ENCODE measurements at regions of chr9 and their contacts with region 1.

Region 1: GRCh38 chr9:70111042-70111602 is 67.5 kb downstream of the MAMDC2 start:
- DNase-seq: no peak
- H3K4me3 ChIP-seq: no peak overlapping the region
- H3K27me3 ChIP-seq: no peaks in the 10 kb centered on the region
- CTCF ChIP-seq: peak; percentile 91

Region 2: GRCh38 chr9:69919461-69920061 is 191.6 kb before region 1 on chr9:
- CTCF ChIA-PET with region 1: interaction called, 34 read pairs
- POLR2A ChIA-PET with region 1: no interaction called
- DNase-seq: no peak
- H3K4me3 ChIP-seq: no peak overlapping the region
- H3K27me3 ChIP-seq: no peaks in the 10 kb centered on the region
- CTCF ChIP-seq: peak; percentile 68

Region 3: GRCh38 chr9:69971643-69972449 is 139.3 kb before region 1 on chr9:
- CTCF ChIA-PET with region 1: interaction called, 130 read pairs
- POLR2A ChIA-PET with region 1: interaction called, 17 read pairs
- DNase-seq: peak; percentile 44
- H3K4me3 ChIP-seq: no peak overlapping the region
- H3K27me3 ChIP-seq: no peaks in the 10 kb centered on the region
- CTCF ChIP-seq: peak; percentile 94

Region 4: GRCh38 chr9:70049236-70049635 is 61.9 kb before region 1 on chr9:
- CTCF ChIA-PET with region 1: interaction called, 12 read pairs
- POLR2A ChIA-PET with region 1: interaction called, 4 read pairs
- DNase-seq: no peak
- H3K4me3 ChIP-seq: no peak overlapping the region
- H3K27me3 ChIP-seq: no peaks in the 10 kb centered on the region
- CTCF ChIP-seq: no peak

Region 5: GRCh38 chr9:70127540-70128416 is 16.7 kb after region 1 on chr9:
- CTCF ChIA-PET with region 1: interaction called, 25 read pairs
- POLR2A ChIA-PET with region 1: no interaction called
- DNase-seq: no peak
- H3K4me3 ChIP-seq: no peak overlapping the region
- H3K27me3 ChIP-seq: no peaks in the 10 kb centered on the region
- CTCF ChIP-seq: no peak

Region 6: GRCh38 chr9:70229579-70229978 is 118.5 kb after region 1 on chr9:
- CTCF ChIA-PET with region 1: interaction called, 30 read pairs
- POLR2A ChIA-PET with region 1: no interaction called
- DNase-seq: no peak
- H3K4me3 ChIP-seq: no peak overlapping the region
- H3K27me3 ChIP-seq: no peaks in the 10 kb centered on the region
- CTCF ChIP-seq: peak; percentile 42

Region 7: GRCh38 chr9:70263421-70263820 is 152.3 kb after region 1 on chr9:
- CTCF ChIA-PET with region 1: no interaction called
- POLR2A ChIA-PET with region 1: no interaction called
- DNase-seq: no peak
- H3K4me3 ChIP-seq: no peak overlapping the region
- H3K27me3 ChIP-seq: no peaks in the 10 kb centered on the region
- CTCF ChIP-seq: no peak

Region 8: DNA sequence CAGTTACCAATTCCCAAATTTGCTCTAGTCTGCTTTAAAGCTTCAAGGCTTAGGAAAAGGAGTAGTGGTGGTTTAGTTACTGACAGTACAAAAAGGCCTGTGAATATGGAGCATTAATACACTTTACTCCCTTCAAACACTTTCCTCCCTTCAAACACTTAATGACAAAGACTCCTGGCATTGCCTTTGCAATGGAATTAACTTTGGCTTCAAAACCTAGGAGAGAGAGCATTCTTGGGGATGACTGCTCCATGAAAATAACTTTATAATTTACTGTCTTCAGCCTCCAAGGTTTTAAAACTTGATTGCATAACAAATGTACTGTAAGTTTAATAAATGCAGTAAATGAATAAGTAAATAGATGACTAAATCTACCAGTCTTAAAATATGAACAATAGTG is 824.7 kb after region 1 on chr9:
- CTCF ChIA-PET with region 1: no interaction called
- POLR2A ChIA-PET with region 1: no interaction called
- DNase-seq: peak; percentile 81
- H3K4me3 ChIP-seq: no peak overlapping the region
- H3K27me3 ChIP-seq: no peaks in the 10 kb centered on the region
- CTCF ChIP-seq: no peak

Measured in BJ (cell line).